HCT116 (cell line): ENCODE measurements at regions of chr14 and their contacts with region 1.

Region 1: GRCh38 chr14:76956316-76957090 is 72.0 kb downstream of the IRF2BPL start:
- DNase-seq: peak; percentile 82
- ATAC-seq: peak; percentile 45
- H3K4me3 ChIP-seq: peak overlapping the region; percentile 30 to 52
- H3K27ac ChIP-seq: peak overlapping the region; percentile 100
- H3K4me1 ChIP-seq: peaks cover 95 to 99% of the 10 kb centered on the region in 2 experiments
- H3K27me3 ChIP-seq: no peaks in the 10 kb centered on the region
- CTCF ChIP-seq: 0 out of 6 replicates have a peak, but pooled peaks of 1 of the 3 experiments have one; percentile 7
- POLR2A ChIP-seq: no peak
- RAD21 ChIP-seq: no peak

Region 2: GRCh38 chr14:76829650-76830421 is 126.7 kb before region 1 on chr14:
- CTCF ChIA-PET with region 1: no interaction called
- POLR2A ChIA-PET with region 1: no interaction called
- RAD21 ChIA-PET with region 1: no interaction called
- intact Hi-C with region 1: no loop called
- DNase-seq: no peak
- ATAC-seq: no peak
- H3K4me3 ChIP-seq: no peak overlapping the region
- H3K27ac ChIP-seq: no peak overlapping the region
- H3K4me1 ChIP-seq: peaks cover 0 to 5% of the 10 kb centered on the region in 2 experiments; a peak in 1 of 4 replicates
- H3K27me3 ChIP-seq: no peaks in the 10 kb centered on the region
- CTCF ChIP-seq: no peak
- POLR2A ChIP-seq: no peak
- RAD21 ChIP-seq: no peak

Region 3: GRCh38 chr14:77023001-77023996 is 66.8 kb after region 1 on chr14:
- CTCF ChIA-PET with region 1: interaction called, 8 read pairs
- POLR2A ChIA-PET with region 1: interaction called, 15 read pairs
- RAD21 ChIA-PET with region 1: interaction called, 7 read pairs
- intact Hi-C with region 1: loop called (anchors 2 kb)
- DNase-seq: no peak
- ATAC-seq: peak; percentile 40
- H3K4me3 ChIP-seq: peak overlapping the region in 1 of 2 experiments; percentile 17; a peak in 2 of 4 replicates
- H3K27ac ChIP-seq: peak overlapping the region; percentile 86
- H3K4me1 ChIP-seq: peaks cover 61 to 69% of the 10 kb centered on the region in 2 experiments
- H3K27me3 ChIP-seq: no peaks in the 10 kb centered on the region
- CTCF ChIP-seq: peak in 2 of 3 experiments; percentile 18 to 33; a peak in 3 of 6 replicates
- POLR2A ChIP-seq: peak; percentile 44
- RAD21 ChIP-seq: no peak

Region 4: DNA sequence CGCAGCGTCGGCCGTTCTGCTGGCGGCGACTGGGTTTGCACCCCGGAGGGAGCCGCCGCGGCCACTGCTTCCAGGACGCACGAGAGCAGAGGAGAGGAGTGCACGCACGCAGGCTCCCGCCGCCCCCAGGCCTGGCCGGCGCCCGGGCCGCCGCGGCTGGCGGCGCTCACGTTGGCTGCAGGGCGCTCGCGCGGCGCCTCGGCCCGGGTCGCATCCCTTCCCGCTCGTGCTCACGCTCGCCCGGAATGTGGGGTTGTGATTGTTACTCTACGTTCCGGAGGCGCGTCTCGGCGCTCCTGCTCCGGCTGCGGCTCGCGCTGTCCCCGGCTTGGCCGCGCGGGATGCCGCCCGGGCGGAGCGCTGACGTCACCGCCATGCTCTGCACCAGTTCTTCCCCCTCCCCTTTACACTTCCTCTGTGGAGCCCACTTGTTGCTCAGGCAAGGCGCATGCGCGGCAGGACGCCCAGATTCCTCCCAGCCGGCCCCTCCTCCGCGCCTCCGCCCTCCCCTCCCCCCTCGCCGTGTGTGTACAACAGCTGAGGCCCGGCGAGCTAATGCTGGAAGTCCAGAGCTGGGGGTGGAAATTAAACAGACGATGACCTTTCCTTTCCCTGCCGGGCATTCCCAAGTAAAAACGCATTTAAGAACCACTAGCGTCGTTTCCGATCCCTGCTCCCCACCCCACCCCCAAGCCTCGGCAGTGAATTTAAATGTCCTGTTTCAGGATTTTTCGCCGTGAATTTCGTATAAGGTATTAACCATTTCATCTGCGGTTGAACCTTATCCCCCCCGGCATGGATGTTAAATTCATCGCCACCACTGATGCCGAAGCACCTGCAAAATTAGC is 72.1 kb after region 1 on chr14 and contains the start of gene IRF2BPL:
- CTCF ChIA-PET with region 1: interaction called, 8 read pairs
- POLR2A ChIA-PET with region 1: interaction called, 15 read pairs
- RAD21 ChIA-PET with region 1: interaction called, 7 read pairs
- intact Hi-C with region 1: loop called (anchors 2 kb)
- DNase-seq: peak; percentile 91
- ATAC-seq: peak; percentile 81
- H3K4me3 ChIP-seq: peak within 1 kb of the TSS; percentile 61 to 89
- H3K27ac ChIP-seq: peak within 1 kb of the TSS; percentile 100
- H3K4me1 ChIP-seq: peaks cover 70 to 73% of the 10 kb centered on the region in 2 experiments
- H3K27me3 ChIP-seq: no peaks in the 10 kb centered on the region
- CTCF ChIP-seq: no peak
- POLR2A ChIP-seq: peak; percentile 92
- RAD21 ChIP-seq: no peak
- total RNA-seq, gene IRF2BPL: 74.6 TPM

Region 5: DNA sequence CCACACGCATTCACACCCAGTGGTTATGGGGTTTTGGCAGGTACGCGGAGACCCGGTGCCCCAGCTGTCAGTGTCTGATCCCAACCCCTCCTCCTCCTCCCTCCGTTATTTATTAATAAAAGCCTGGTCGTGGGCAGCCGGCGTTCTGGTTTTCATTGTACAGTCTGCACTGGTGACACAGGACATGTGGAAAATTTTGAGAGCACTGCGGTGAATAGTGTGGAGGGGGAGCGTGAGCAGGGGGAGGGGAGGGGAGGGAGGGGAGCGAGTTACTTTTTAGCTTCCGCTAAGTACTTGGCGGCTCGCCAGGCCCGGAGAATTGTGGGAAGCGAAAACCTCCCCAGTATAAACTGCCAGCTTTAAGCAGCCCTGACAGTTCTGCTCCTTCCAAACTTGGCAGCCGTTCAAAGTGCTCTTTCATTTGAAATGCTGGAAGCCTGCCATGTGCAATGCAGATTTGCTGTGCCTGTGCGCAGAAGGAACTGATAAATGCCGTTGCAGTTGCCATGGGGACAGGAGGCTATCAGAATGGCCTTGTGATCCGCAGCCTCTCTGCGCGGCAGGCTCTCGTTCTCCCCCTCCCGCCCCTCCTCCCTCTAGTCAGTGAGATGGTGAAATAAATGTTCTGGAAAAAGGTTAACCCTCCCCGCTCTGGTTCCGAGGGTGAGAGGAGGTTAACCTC is 83.7 kb after region 1 on chr14:
- CTCF ChIA-PET with region 1: interaction called, 5 read pairs
- POLR2A ChIA-PET with region 1: interaction called, 9 read pairs
- RAD21 ChIA-PET with region 1: interaction called in 1 of 2 experiments, 6 read pairs
- intact Hi-C with region 1: loop called (anchors 5 kb)
- DNase-seq: peak; percentile 94
- ATAC-seq: peak; percentile 77
- H3K4me3 ChIP-seq: peak overlapping the region; percentile 35 to 49
- H3K27ac ChIP-seq: peak overlapping the region; percentile 87
- H3K4me1 ChIP-seq: peaks cover 72 to 77% of the 10 kb centered on the region in 2 experiments
- H3K27me3 ChIP-seq: no peaks in the 10 kb centered on the region
- CTCF ChIP-seq: no peak
- POLR2A ChIP-seq: no peak
- RAD21 ChIP-seq: no peak

Region 6: DNA sequence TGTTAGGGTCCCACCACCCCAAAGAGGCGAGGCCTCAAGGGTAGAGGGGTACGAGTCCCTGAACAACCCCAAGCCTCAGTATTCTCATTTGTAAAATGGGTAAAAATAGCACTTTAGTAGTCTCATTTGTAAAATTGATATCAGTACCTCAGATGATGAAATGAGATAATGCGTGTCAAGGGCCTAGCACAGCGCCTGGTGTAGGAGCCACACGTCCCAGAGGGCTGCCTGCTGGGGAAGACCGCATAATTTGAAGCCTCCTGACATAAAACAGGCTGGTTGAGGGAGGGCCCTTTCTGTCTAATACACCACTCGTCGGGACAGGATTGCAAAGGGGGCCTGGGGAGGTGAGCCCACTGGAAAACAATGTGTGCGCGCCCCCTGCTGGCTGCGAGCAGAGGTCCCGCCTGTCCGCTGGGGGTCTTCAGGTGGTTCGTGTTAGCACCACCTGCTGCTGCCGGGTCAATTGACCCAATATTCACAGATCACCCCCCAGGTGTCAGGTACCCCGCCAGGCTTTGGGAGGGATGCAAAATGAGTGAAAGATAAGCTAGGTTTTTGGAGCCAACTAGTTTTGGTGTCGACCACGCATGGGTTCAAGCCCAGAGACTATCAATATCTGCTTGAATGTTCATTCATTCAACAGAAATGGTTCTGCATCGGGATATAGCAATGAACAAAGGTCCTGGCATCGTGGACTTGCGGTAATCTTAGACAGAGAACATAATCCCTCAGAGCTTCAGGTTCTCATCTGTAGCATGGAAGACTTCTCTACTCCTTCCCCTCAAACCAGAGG is 96.7 kb after region 1 on chr14:
- CTCF ChIA-PET with region 1: interaction called, 10 read pairs
- POLR2A ChIA-PET with region 1: interaction called, 7 read pairs
- RAD21 ChIA-PET with region 1: no interaction called
- intact Hi-C with region 1: loop called (anchors 1 kb)
- DNase-seq: no peak
- ATAC-seq: peak; percentile 84
- H3K4me3 ChIP-seq: no peak overlapping the region
- H3K27ac ChIP-seq: peak overlapping the region; percentile 50; the same call in 1 of the 2 replicates
- H3K4me1 ChIP-seq: peaks cover 27 to 33% of the 10 kb centered on the region in 2 experiments
- H3K27me3 ChIP-seq: no peaks in the 10 kb centered on the region
- CTCF ChIP-seq: peak in 2 of 3 experiments; percentile 90 to 99; a peak in 4 of 6 replicates
- POLR2A ChIP-seq: no peak
- RAD21 ChIP-seq: no peak

Region 7: DNA sequence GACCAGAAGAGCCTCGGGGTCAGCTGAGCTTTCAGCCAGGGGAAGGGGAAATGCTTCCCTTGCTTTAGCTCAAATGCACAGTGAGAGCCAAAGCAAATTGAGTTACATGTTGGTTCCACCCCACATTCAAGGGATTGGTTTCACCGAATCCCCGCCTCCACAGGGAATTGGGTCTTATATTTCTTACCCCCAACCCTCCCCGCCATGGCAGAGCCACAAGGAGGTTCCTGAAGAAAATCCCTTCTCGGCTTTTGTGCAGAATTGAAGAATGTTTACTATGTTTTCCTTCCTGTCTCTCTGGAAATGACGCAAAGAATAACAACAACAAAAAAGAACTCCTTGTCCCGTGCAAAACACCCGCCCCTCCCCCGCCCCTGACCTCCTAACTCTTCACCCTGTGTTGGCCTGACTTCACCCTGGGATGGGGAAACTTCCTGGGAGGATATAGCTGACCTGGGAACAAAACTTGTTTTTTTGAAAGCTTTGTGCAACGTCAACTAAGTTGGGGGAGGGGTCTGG is 119.7 kb after region 1 on chr14:
- CTCF ChIA-PET with region 1: interaction called, 10 read pairs
- POLR2A ChIA-PET with region 1: interaction called, 5 read pairs
- RAD21 ChIA-PET with region 1: no interaction called
- intact Hi-C with region 1: no loop called
- DNase-seq: no peak
- ATAC-seq: no peak
- H3K4me3 ChIP-seq: no peak overlapping the region
- H3K27ac ChIP-seq: no peak overlapping the region
- H3K4me1 ChIP-seq: peaks cover 19 to 31% of the 10 kb centered on the region in 2 experiments
- H3K27me3 ChIP-seq: no peaks in the 10 kb centered on the region
- CTCF ChIP-seq: no peak
- POLR2A ChIP-seq: no peak
- RAD21 ChIP-seq: no peak